ENCODE measurements at regions of chr11 and their contacts with region 1.

Region 1: GRCh38 chr11:77047007-77047927 is 13.1 kb downstream of the B3GNT6 start:
- DNase-seq: peak in 8 of 9 donors; percentile 51 to 94 (median 92)
- ATAC-seq: peak; percentile 89
- H3K4me3 ChIP-seq: peak overlapping the region; percentile 70
- H3K4me3 Mint-ChIP-seq: peak overlapping the region; percentile 55 to 82 (median 70)
- H3K27ac ChIP-seq: peak overlapping the region; percentile 60
- H3K27ac Mint-ChIP-seq: peak overlapping the region; percentile 8 to 75 (median 58)
- H3K4me1 ChIP-seq: peaks cover 4 to 14% of the 10 kb centered on the region in 2 donors
- H3K4me1 Mint-ChIP-seq: peaks cover 6 to 17% (median 12%) of the 10 kb centered on the region in 7 donors
- H3K27me3 ChIP-seq: no peaks in the 10 kb centered on the region
- H3K27me3 Mint-ChIP-seq: peaks cover 6 to 25% (median 9%) of the 10 kb centered on the region in 5 donors

Region 2: DNA sequence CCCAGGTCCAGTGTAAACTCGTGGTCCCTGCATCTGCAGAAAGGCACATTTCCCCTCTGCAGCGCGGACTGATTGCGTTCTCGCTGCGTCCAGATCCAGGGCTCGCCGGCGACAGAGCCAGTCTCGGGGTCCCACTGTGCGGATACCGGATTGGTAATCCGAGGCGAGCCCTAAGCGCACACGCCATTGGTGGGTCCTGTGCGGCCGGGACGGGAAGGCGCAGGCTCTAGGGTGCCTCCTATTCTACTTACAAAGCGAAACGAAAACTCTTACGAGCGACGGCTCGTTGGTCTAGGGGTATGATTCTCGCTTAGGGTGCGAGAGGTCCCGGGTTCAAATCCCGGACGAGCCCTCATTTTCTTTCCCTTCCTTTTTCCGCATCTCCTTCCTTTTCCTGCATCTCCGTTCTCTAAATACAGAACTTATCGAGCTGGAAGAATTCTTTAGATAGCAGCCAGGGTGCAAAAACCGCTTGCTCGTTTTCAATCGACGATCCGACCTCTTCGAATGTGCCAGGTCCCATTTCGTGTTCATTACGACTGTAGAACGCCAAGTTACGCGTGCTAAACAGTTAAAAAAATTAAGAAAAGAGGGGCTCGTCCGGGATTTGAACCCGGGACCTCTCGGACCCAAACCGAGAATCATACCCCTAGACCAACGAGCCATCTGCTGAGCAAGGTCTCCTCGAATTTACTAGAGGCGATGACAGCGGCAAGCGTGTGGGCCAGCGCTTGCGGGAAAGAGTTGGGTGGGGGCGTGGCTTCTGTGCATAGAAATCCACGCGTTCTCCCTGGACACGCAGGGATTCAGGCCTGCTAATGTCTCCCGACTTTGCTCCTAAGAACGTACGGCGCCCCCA is 811.8 kb before region 1 on chr11:
- CTCF ChIA-PET with region 1: no interaction called
- POLR2A ChIA-PET with region 1: no interaction called
- intact Hi-C with region 1: loop called in 1 of 2 experiments (anchors 10 kb)
- DNase-seq: peak; percentile 79 to 95 (median 92)
- ATAC-seq: peak; percentile 87
- H3K4me3 ChIP-seq: peak overlapping the region; percentile 98
- H3K4me3 Mint-ChIP-seq: peak overlapping the region; percentile 82 to 94 (median 91)
- H3K27ac ChIP-seq: peak overlapping the region; percentile 57
- H3K27ac Mint-ChIP-seq: peak overlapping the region; percentile 89 to 99 (median 96)
- H3K4me1 ChIP-seq: peaks cover 26 to 40% of the 10 kb centered on the region in 2 donors
- H3K4me1 Mint-ChIP-seq: peaks cover 16 to 65% (median 55%) of the 10 kb centered on the region in 7 donors
- H3K27me3 ChIP-seq: no peaks in the 10 kb centered on the region
- H3K27me3 Mint-ChIP-seq: peaks cover 0 to 30% (median 0%) of the 10 kb centered on the region in 5 donors

Region 3: GRCh38 chr11:76919887-76920746 is 127.2 kb before region 1 on chr11:
- CTCF ChIA-PET with region 1: interaction called, 3 read pairs
- POLR2A ChIA-PET with region 1: no interaction called
- intact Hi-C with region 1: loop called (anchors 1 to 2 kb)
- DNase-seq: peak; percentile 16 to 78 (median 74)
- ATAC-seq: peak; percentile 84
- H3K4me3 ChIP-seq: peak overlapping the region; percentile 51
- H3K4me3 Mint-ChIP-seq: peak overlapping the region; percentile 18 to 86 (median 77)
- H3K27ac ChIP-seq: no peak overlapping the region
- H3K27ac Mint-ChIP-seq: peak overlapping the region in 1 of 9 donors; percentile 52
- H3K4me1 ChIP-seq: peaks cover 0 to 4% of the 10 kb centered on the region in 2 donors
- H3K4me1 Mint-ChIP-seq: peaks cover 0 to 12% (median 11%) of the 10 kb centered on the region in 7 donors
- H3K27me3 ChIP-seq: no peaks in the 10 kb centered on the region
- H3K27me3 Mint-ChIP-seq: peaks cover 0 to 5% (median 0%) of the 10 kb centered on the region in 5 donors

Region 4: GRCh38 chr11:77113382-77114088 is 66.3 kb after region 1 on chr11:
- CTCF ChIA-PET with region 1: interaction called, 3 read pairs
- POLR2A ChIA-PET with region 1: no interaction called
- intact Hi-C with region 1: loop called in 1 of 2 experiments (anchors 1 kb)
- DNase-seq: no peak
- ATAC-seq: no peak
- H3K4me3 ChIP-seq: no peak overlapping the region
- H3K4me3 Mint-ChIP-seq: no peak overlapping the region
- H3K27ac ChIP-seq: no peak overlapping the region
- H3K27ac Mint-ChIP-seq: peak overlapping the region in 2 of 9 donors; percentile 59 to 68
- H3K4me1 ChIP-seq: no peaks in the 10 kb centered on the region
- H3K4me1 Mint-ChIP-seq: peaks cover 0 to 3% (median 0%) of the 10 kb centered on the region in 7 donors
- H3K27me3 ChIP-seq: no peaks in the 10 kb centered on the region
- H3K27me3 Mint-ChIP-seq: no peaks in the 10 kb centered on the region

Region 5: GRCh38 chr11:77547863-77548551 is 500.7 kb after region 1 on chr11:
- CTCF ChIA-PET with region 1: no interaction called
- POLR2A ChIA-PET with region 1: no interaction called
- intact Hi-C with region 1: loop called in 1 of 2 experiments (anchors 1 kb)
- DNase-seq: peak in 7 of 9 donors; percentile 21 to 64 (median 52)
- ATAC-seq: peak; percentile 65
- H3K4me3 ChIP-seq: no peak overlapping the region
- H3K4me3 Mint-ChIP-seq: peak overlapping the region in 1 of 10 donors; percentile 40
- H3K27ac ChIP-seq: no peak overlapping the region
- H3K27ac Mint-ChIP-seq: no peak overlapping the region
- H3K4me1 ChIP-seq: no peaks in the 10 kb centered on the region
- H3K4me1 Mint-ChIP-seq: peaks cover 0 to 8% (median 4%) of the 10 kb centered on the region in 7 donors
- H3K27me3 ChIP-seq: no peaks in the 10 kb centered on the region
- H3K27me3 Mint-ChIP-seq: no peaks in the 10 kb centered on the region

Region 6: GRCh38 chr11:77994412-77995362 is 947.4 kb after region 1 on chr11 and contains the start of gene INTS4:
- CTCF ChIA-PET with region 1: no interaction called
- POLR2A ChIA-PET with region 1: no interaction called
- intact Hi-C with region 1: loop called in 1 of 2 experiments (anchors 10 kb)
- DNase-seq: peak; percentile 88 to 99 (median 99)
- ATAC-seq: peak; percentile 98
- H3K4me3 ChIP-seq: peak within 1 kb of the TSS; percentile 88
- H3K4me3 Mint-ChIP-seq: peak within 1 kb of the TSS; percentile 87 to 96 (median 94)
- H3K27ac ChIP-seq: peak within 1 kb of the TSS; percentile 84
- H3K27ac Mint-ChIP-seq: peak within 1 kb of the TSS; percentile 86 to 99 (median 97)
- H3K4me1 ChIP-seq: peaks cover 16 to 18% of the 10 kb centered on the region in 2 donors
- H3K4me1 Mint-ChIP-seq: peaks cover 10 to 45% (median 28%) of the 10 kb centered on the region in 7 donors
- H3K27me3 ChIP-seq: no peaks in the 10 kb centered on the region
- H3K27me3 Mint-ChIP-seq: no peaks in the 10 kb centered on the region
- total RNA-seq, gene INTS4: 54.4 to 87.0 (median 65.0) TPM